Natural killer cell (primary cell): ENCODE measurements at regions of chr5 and their contacts with region 1.

Region 1: GRCh38 chr5:73066466-73066865 is 53.9 kb upstream of the TMEM171 start:
- DNase-seq: no peak
- ATAC-seq: no peak
- H3K4me3 ChIP-seq: no peak overlapping the region
- H3K4me3 Mint-ChIP-seq: no peak overlapping the region
- H3K27ac ChIP-seq: no peak overlapping the region
- H3K27ac Mint-ChIP-seq: no peak overlapping the region
- H3K4me1 ChIP-seq: no peaks in the 10 kb centered on the region
- H3K4me1 Mint-ChIP-seq: no peaks in the 10 kb centered on the region
- H3K27me3 ChIP-seq: no peaks in the 10 kb centered on the region
- H3K27me3 Mint-ChIP-seq: no peaks in the 10 kb centered on the region
- CTCF ChIP-seq: no peak

Region 2: DNA sequence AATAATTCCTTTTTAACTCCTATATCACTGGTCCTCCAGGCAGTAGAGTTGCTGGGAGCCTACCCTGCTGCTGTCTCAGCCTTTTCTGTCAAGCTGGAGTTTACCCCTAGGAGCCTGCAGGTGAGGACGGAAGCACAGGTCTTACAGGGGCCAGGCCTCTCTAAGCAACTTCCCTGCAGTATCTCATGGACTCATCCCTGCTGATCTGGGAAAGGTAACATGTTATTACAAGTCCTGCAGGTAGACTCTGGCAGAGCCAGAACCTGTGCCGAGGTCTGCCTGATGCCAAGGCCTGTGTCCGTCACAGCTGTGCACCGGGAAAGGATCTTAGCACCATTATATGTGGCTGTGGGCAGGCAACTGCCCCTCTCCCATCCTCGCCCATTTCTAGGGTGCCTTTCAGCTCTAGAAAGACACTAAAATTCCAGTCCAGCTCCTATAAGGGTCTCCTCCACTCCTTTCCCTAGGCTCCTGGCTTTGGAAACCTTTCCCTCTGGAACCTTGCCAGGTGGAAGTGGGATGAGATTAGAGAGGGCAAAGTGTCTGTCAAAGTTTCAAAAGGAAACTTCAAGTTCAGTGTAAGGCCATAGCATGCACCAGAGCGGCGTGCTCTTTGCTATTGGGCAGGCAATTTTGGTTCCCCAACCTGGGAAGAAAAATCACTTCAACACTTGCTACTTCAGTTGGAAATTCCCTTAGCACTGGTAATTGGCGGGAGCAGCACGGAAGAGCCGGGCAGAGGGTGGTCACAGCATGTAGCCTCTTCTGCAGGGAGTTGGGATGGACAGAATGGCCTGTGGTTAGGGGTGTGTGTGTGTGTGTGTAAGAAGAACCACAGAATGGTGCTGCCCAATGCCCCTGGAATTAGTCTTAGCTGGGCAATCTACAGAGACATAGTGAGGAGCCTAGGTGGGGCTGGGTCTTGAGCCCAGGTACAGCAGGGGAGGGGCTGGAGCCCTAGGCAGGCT is 71.4 kb after region 1 on chr5:
- intact Hi-C with region 1: no loop called
- DNase-seq: no peak
- ATAC-seq: no peak
- H3K4me3 ChIP-seq: no peak overlapping the region
- H3K4me3 Mint-ChIP-seq: no peak overlapping the region
- H3K27ac ChIP-seq: no peak overlapping the region
- H3K27ac Mint-ChIP-seq: no peak overlapping the region
- H3K4me1 ChIP-seq: no peaks in the 10 kb centered on the region
- H3K4me1 Mint-ChIP-seq: peaks cover 0 to 5% of the 10 kb centered on the region in 2 donors
- H3K27me3 ChIP-seq: peaks cover 10% of the 10 kb centered on the region
- H3K27me3 Mint-ChIP-seq: peaks cover 13 to 30% of the 10 kb centered on the region in 2 donors
- CTCF ChIP-seq: no peak

Region 3: GRCh38 chr5:73262991-73263710 is 196.7 kb after region 1 on chr5:
- intact Hi-C with region 1: no loop called
- DNase-seq: no peak
- ATAC-seq: no peak
- H3K4me3 ChIP-seq: no peak overlapping the region
- H3K4me3 Mint-ChIP-seq: no peak overlapping the region
- H3K27ac ChIP-seq: no peak overlapping the region
- H3K27ac Mint-ChIP-seq: no peak overlapping the region
- H3K4me1 ChIP-seq: no peaks in the 10 kb centered on the region
- H3K4me1 Mint-ChIP-seq: no peaks in the 10 kb centered on the region
- H3K27me3 ChIP-seq: no peaks in the 10 kb centered on the region
- H3K27me3 Mint-ChIP-seq: peaks cover 28 to 35% of the 10 kb centered on the region in 2 donors
- CTCF ChIP-seq: no peak

Region 4: DNA sequence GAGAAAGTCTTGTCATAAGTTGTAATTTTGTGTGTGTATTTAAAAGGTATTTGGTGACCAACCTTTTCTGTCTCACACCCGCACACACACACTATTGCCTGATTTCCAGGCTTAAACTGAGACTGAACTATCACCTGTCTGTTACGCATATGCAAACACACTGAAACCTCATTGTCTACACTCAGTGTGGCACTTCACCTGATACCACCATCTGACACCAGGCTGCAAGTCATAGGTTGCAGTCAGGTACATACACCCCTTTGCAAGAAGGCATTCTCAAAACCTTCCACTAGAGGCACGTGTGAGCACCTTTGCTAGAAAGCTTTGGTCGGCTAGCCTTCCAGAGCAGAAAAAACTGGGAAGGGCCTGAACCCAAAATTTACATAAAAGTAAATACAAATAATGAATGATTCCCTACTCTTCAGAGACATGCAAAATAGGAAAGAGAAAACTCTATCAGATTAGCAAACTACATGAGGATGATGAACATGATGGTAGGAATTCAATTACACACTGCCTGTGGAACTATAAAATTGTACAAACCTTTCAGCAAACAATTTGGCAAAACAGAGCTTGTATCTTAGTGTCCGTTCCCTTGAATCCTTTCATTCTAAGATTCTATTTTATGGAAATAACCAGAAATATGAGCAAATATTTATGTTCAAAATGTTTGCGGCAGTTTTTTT is 388.0 kb after region 1 on chr5:
- intact Hi-C with region 1: loop called (anchors 10 kb)
- DNase-seq: peak in 1 of 2 donors; percentile 74
- ATAC-seq: peak; percentile 63 to 68 (median 65)
- H3K4me3 ChIP-seq: no peak overlapping the region
- H3K4me3 Mint-ChIP-seq: no peak overlapping the region
- H3K27ac ChIP-seq: no peak overlapping the region
- H3K27ac Mint-ChIP-seq: no peak overlapping the region
- H3K4me1 ChIP-seq: peaks cover 11% of the 10 kb centered on the region
- H3K4me1 Mint-ChIP-seq: peaks cover 6 to 7% of the 10 kb centered on the region in 2 donors
- H3K27me3 ChIP-seq: peaks cover 70% of the 10 kb centered on the region
- H3K27me3 Mint-ChIP-seq: peaks cover 53 to 76% of the 10 kb centered on the region in 2 donors
- CTCF ChIP-seq: peak; percentile 72

Region 5: GRCh38 chr5:73701518-73701917 is 635.1 kb after region 1 on chr5:
- intact Hi-C with region 1: no loop called
- DNase-seq: no peak
- ATAC-seq: no peak
- H3K4me3 ChIP-seq: no peak overlapping the region
- H3K4me3 Mint-ChIP-seq: no peak overlapping the region
- H3K27ac ChIP-seq: no peak overlapping the region
- H3K27ac Mint-ChIP-seq: no peak overlapping the region
- H3K4me1 ChIP-seq: no peaks in the 10 kb centered on the region
- H3K4me1 Mint-ChIP-seq: peaks cover 6 to 7% of the 10 kb centered on the region in 2 donors
- H3K27me3 ChIP-seq: no peaks in the 10 kb centered on the region
- H3K27me3 Mint-ChIP-seq: peaks cover 0 to 4% of the 10 kb centered on the region in 2 donors
- CTCF ChIP-seq: no peak